PC-3 (cell line): ENCODE measurements at regions of chr10 and their contacts with region 1.

Region 1: DNA sequence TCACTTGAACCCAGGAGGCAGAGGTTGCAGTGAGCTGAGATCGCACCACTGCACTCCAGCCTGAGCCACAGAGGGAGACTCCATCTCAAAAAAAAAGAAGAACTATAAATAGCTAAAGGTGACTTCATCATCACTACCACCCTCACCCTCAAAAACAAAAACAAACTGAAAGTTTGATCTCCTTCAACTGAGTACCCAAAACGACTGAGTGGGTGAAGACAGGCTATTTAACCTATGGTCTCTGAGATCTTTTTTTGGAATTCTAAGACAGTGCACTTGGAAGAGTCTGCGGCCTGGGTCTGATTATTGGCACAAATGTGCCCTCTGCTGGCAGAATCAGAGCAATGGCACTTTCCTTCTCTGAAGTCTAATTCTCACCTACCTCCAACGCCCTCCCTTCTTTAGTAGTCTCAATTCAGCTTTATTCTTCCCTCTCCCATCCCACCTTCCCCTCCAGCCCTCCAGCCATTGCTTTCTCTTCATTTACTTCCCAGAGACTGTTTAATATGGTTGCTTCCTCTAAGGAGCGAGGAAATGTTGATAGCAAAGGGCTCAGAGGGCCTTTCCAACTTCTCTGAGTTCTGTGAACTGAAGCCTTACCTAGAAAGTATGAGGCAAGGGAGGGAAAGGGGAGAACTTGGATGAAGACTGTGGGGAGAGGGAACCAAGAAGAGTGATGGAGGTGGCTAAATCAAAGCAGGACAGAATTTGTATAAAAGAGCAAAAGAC is 2.9 kb upstream of the MYOZ1 start:
- DNase-seq: peak; percentile 99
- ATAC-seq: peak; percentile 86
- H3K4me3 ChIP-seq: no peak overlapping the region
- H3K27ac ChIP-seq: no peak overlapping the region
- H3K4me1 ChIP-seq: no peaks in the 10 kb centered on the region
- H3K27me3 ChIP-seq: no peaks in the 10 kb centered on the region
- CTCF ChIP-seq: peak; percentile 100

Region 2: DNA sequence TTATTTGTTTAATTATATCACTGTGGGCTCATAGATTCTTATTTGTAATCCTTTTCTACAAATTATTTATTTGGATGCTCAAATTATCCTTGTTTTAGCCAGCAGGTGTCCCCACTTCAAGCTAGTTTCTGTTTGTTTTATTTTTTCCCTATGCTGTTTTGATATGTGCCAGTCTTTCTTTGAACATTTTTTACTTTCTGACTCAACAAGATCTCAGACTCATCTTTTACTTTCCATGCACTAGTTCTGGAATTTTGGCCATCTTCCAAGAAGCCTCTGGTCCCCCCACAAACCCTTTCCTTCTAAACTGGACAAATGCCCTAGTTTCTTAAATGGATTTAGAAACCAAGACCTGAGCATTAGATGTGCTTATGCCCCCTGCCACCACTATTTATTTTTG is 380.2 kb before region 1 on chr10:
- CTCF ChIA-PET with region 1: no interaction called
- POLR2A ChIA-PET with region 1: no interaction called
- intact Hi-C with region 1: loop called (anchors 1 kb)
- DNase-seq: peak; percentile 90
- ATAC-seq: peak; percentile 37
- H3K4me3 ChIP-seq: no peak overlapping the region
- H3K27ac ChIP-seq: no peak overlapping the region
- H3K4me1 ChIP-seq: peaks cover 20% of the 10 kb centered on the region
- H3K27me3 ChIP-seq: no peaks in the 10 kb centered on the region; the same call in 1 of the 2 replicates
- CTCF ChIP-seq: peak; percentile 99

Region 3: GRCh38 chr10:73576178-73576889 is 67.8 kb before region 1 on chr10:
- CTCF ChIA-PET with region 1: interaction called, 8 read pairs
- POLR2A ChIA-PET with region 1: no interaction called
- intact Hi-C with region 1: loop called (anchors 1 kb)
- DNase-seq: peak; percentile 98
- ATAC-seq: peak; percentile 61
- H3K4me3 ChIP-seq: no peak overlapping the region
- H3K27ac ChIP-seq: peak overlapping the region; percentile 49
- H3K4me1 ChIP-seq: peaks cover 34% of the 10 kb centered on the region
- H3K27me3 ChIP-seq: no peaks in the 10 kb centered on the region
- CTCF ChIP-seq: no peak

Region 4: GRCh38 chr10:73625884-73626752 is 18.1 kb before region 1 on chr10:
- CTCF ChIA-PET with region 1: interaction called, 7 read pairs
- POLR2A ChIA-PET with region 1: interaction called, 11 read pairs
- intact Hi-C with region 1: loop called (anchors 1 kb)
- DNase-seq: peak; percentile 100
- ATAC-seq: peak; percentile 97
- H3K4me3 ChIP-seq: peak overlapping the region; percentile 76
- H3K27ac ChIP-seq: peak overlapping the region; percentile 40
- H3K4me1 ChIP-seq: peaks cover 14% of the 10 kb centered on the region
- H3K27me3 ChIP-seq: no peaks in the 10 kb centered on the region
- CTCF ChIP-seq: no peak

Region 5: DNA sequence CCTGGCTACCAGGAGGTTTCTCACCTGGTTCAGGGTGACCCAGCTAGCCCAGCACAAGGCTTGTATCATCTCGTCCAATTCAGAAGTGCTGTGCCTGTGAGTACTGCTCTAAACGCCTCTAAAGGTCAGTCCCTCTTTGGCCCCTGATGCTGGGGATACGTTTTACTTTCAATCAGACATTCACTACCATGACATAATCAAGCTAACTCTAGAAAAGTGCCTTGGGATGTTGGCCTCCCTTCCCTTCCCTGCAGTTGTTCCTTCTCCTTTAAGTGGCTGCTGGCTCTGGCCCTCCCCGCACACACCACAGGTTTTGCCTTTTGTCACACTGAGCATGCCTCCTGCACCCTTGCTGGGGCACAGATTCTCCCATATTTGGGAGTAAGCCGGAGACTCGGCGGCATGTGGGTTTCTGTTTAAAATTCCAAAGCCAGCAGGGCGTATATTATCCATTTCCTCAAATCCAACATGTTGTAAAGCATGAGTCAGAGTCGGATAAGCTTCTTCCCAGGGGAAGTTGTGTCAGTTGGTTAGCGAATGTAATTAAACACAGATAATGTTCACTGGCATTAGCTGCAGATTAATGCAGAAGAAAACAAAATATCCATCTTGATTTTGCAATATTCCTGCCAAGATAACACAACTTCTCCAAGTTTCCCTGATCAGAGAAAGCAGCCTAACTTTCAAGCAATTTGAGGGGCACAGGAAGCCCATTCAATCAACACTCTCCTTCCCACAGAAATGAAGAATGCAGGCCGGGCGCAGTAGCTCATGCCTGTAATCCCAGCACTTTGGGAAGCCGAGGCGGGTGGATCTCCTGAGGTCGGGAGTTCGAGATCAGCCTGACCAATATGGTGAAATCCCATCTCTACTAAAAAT is 321.9 kb after region 1 on chr10:
- CTCF ChIA-PET with region 1: no interaction called
- POLR2A ChIA-PET with region 1: no interaction called
- intact Hi-C with region 1: no loop called
- DNase-seq: peak; percentile 100
- ATAC-seq: peak; percentile 98
- H3K4me3 ChIP-seq: peak overlapping the region; percentile 6
- H3K27ac ChIP-seq: peak overlapping the region; percentile 73
- H3K4me1 ChIP-seq: peaks cover 27% of the 10 kb centered on the region
- H3K27me3 ChIP-seq: no peaks in the 10 kb centered on the region
- CTCF ChIP-seq: no peak

Region 6: DNA sequence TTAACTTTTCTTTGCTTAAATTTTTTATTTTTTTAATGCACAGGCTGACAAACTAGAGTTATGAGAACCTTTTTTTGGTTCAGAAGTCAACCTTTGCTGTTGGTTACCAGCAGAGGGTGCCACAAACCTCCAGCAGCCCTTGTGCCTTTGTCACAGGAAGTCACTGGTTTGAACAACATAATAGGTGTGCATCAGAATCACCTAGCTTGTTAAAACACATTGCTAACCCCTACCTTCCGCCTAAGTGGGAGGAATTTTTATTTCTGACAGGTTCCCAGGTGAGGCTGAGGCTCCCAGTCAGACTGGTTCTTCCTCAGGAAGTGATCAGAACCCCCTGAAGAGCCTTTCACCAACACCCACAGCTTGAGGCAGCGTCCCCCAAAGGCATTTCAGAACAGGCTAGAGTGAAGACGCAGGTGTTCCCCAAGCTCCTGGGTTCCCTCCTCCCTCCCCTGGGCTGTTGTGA is 1543.8 kb after region 1 on chr10:
- CTCF ChIA-PET with region 1: no interaction called
- POLR2A ChIA-PET with region 1: interaction called, 25 read pairs
- intact Hi-C with region 1: no loop called
- DNase-seq: peak; percentile 99
- ATAC-seq: peak; percentile 64
- H3K4me3 ChIP-seq: no peak overlapping the region
- H3K27ac ChIP-seq: peak overlapping the region; percentile 6
- H3K4me1 ChIP-seq: peaks cover 31% of the 10 kb centered on the region
- H3K27me3 ChIP-seq: no peaks in the 10 kb centered on the region
- CTCF ChIP-seq: peak; percentile 98